SK-MEL-5 (cell line): ENCODE measurements at regions of chr17 and their contacts with region 1.

Region 1: GRCh38 chr17:57226793-57227192 is 29.5 kb upstream of the MSI2 start:
- DNase-seq: no peak

Region 2: DNA sequence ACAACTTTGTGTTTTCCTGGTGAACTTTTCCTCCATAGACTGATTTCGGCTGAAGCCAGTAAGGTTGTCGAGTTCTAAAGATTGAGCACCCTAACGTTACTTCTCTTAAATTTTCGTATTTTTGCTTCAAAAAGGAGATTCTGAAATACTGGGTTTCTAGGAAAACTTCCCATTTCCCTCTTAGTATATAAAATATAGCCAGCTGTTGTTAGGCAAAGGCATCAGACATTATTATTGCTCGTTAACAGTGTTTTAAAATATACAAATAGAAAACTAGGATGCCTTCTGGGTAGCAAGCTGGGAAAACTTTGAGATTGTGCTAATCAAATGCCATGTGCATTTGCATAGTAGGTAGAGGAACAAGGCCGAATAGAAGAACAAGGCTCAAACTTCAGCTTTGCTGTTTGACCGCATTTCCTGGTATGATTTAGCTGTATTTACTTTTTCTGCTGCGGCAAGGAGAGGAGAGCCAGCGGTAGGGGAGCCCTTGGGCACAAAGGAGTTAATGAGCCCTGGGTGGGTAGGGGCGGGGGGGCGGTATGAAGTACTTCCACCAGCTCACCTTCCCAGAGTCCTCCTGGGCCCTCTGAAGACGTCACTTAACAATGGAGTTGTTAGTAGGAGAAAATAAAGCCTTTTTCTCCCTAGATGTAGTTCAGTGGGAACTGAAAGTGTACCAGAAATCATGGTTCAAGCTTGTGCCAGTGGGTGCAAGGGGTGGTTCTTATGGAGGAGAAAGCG is 181.4 kb after region 1 on chr17:
- in situ Hi-C with region 1: loop called (anchors 10 kb)
- DNase-seq: no peak